ENCODE measurements at regions of chr22 and their contacts with region 1.

Region 1: DNA sequence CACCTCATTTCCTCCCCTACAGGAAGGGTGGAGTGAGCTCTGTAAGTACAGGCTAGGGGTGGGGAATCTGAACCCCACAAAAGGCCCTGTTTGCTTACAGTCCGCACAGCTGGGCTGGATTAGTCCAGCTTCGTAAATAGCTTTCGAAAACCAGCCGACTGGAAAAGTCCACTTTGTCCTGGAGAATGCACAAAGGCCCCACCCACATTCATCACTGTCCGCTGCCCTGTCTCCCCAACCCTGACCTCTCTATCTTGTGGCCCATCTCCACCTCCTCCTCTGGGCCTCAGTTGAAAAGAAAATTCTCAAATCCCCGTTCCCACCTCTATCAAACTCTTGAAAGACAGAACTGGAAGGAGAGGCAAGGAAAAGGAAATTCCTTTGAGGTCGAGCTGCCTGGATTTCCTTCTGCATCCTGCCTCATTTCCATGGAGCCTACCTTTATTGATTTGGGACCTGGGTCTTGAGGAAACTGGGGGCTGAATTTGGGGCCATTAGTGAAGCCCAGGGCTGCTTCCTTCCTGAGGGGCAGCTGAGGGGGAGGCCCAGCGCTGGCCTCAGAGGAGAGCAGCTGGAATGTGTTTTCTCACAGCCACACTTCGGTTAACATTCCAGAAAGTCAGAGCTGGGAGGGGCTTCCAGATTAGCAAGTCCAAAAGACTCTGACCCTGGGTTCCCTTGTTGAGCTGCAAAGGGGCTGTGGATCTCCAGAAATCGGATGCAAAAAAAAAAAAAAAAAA is 147.6 kb downstream of the FBXO7 start:
- DNase-seq: no peak
- H3K4me3 ChIP-seq: no peak overlapping the region
- H3K27ac ChIP-seq: peak overlapping the region; percentile 73
- H3K4me1 ChIP-seq: no peaks in the 10 kb centered on the region
- H3K27me3 ChIP-seq: no peaks in the 10 kb centered on the region
- CTCF ChIP-seq: no peak
- POLR2A ChIP-seq: no peak

Region 2: GRCh38 chr22:32123657-32124056 is 498.5 kb before region 1 on chr22:
- intact Hi-C with region 1: no loop called
- DNase-seq: no peak
- H3K4me3 ChIP-seq: no peak overlapping the region
- H3K27ac ChIP-seq: peak overlapping the region in 1 of 2 donors; percentile 36
- H3K4me1 ChIP-seq: peaks cover 3% of the 10 kb centered on the region
- H3K27me3 ChIP-seq: no peaks in the 10 kb centered on the region
- CTCF ChIP-seq: no peak
- POLR2A ChIP-seq: no peak

Region 3: GRCh38 chr22:32474635-32475467 is 147.3 kb before region 1 on chr22 and contains the start of gene FBXO7:
- intact Hi-C with region 1: loop called (anchors 5 kb)
- DNase-seq: peak; percentile 86
- H3K4me3 ChIP-seq: peak within 1 kb of the TSS; percentile 96 to 99
- H3K27ac ChIP-seq: peak within 1 kb of the TSS; percentile 99
- H3K4me1 ChIP-seq: peaks cover 7% of the 10 kb centered on the region
- H3K27me3 ChIP-seq: no peaks in the 10 kb centered on the region
- CTCF ChIP-seq: peak in 3 of 4 experiments; percentile 38 to 66 (median 39)
- POLR2A ChIP-seq: peak; percentile 62
- total RNA-seq, gene FBXO7: 82.8 to 128 TPM

Region 4: GRCh38 chr22:32574408-32574807 is 47.8 kb before region 1 on chr22:
- intact Hi-C with region 1: loop called (anchors 5 kb)
- DNase-seq: no peak
- H3K4me3 ChIP-seq: no peak overlapping the region
- H3K27ac ChIP-seq: no peak overlapping the region
- H3K4me1 ChIP-seq: no peaks in the 10 kb centered on the region
- H3K27me3 ChIP-seq: peaks cover 1% of the 10 kb centered on the region
- CTCF ChIP-seq: no peak
- POLR2A ChIP-seq: no peak

Region 5: GRCh38 chr22:32850591-32851517 is 228.7 kb after region 1 on chr22:
- intact Hi-C with region 1: loop called (anchors 5 kb)
- DNase-seq: no peak
- H3K4me3 ChIP-seq: no peak overlapping the region
- H3K27ac ChIP-seq: peak overlapping the region; percentile 72 to 73
- H3K4me1 ChIP-seq: peaks cover 17% of the 10 kb centered on the region
- H3K27me3 ChIP-seq: no peaks in the 10 kb centered on the region
- CTCF ChIP-seq: no peak
- POLR2A ChIP-seq: no peak